HCT116 (cell line): ENCODE measurements at regions of chr10 and their contacts with region 1.

Region 1: GRCh38 chr10:26881600-26882331 is 21.0 kb upstream of the ABI1 start:
- DNase-seq: peak; percentile 69
- ATAC-seq: peak; percentile 95
- H3K4me3 ChIP-seq: peak overlapping the region; percentile 32 to 44
- H3K27ac ChIP-seq: no peak overlapping the region
- H3K4me1 ChIP-seq: peaks cover 0 to 6% of the 10 kb centered on the region in 2 experiments; a peak in 1 of 4 replicates
- H3K27me3 ChIP-seq: no peaks in the 10 kb centered on the region
- CTCF ChIP-seq: peak; percentile 69 to 87 (median 72)
- POLR2A ChIP-seq: no peak
- RAD21 ChIP-seq: peak; percentile 93

Region 2: DNA sequence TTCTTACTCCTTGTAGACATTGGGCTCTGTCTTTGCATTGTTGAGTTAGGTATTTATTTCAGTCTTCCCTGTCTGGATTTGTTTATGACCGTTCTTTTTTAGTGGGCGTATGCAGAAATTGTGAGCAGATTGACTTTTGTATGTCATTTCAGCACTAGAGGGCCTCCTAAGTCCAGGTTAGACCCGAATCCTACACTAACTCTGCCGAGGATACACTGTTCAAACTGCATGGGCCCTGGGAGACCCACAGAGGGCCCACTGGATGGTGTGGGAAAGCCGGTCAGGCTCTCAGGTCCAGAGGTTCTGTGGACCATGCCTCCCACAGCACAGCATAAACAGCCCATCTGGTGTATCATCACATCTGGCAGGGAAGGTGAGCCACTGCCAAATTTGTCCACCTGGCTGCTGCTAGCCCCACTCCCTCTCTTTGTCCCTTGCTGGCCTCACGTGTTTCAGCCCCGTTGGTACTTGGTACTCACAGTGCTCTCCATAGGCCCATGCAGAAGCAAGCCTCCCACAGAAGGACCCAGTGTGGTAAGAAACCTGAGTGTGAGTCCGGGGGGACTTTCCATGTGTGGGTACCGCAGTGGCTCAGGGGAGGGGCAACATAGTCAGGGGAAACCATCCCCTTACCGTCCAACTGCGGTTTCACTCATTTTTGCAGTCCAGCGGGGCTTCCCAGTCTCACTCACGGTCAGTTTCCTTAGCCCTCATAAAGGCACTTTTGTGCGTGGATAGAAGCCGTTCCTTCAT is 330.8 kb before region 1 on chr10:
- CTCF ChIA-PET with region 1: interaction called, 4 read pairs
- POLR2A ChIA-PET with region 1: interaction called, 3 read pairs
- RAD21 ChIA-PET with region 1: no interaction called
- intact Hi-C with region 1: loop called (anchors 2 kb)
- DNase-seq: peak; percentile 51
- ATAC-seq: peak; percentile 99
- H3K4me3 ChIP-seq: no peak overlapping the region
- H3K27ac ChIP-seq: no peak overlapping the region
- H3K4me1 ChIP-seq: no peaks in the 10 kb centered on the region
- H3K27me3 ChIP-seq: peaks cover 12% of the 10 kb centered on the region; the same call in 1 of the 2 replicates
- CTCF ChIP-seq: peak; percentile 51 to 64 (median 57); a peak in 5 of 6 replicates
- POLR2A ChIP-seq: no peak
- RAD21 ChIP-seq: peak; percentile 73

Region 3: GRCh38 chr10:26612151-26612915 is 269.4 kb before region 1 on chr10:
- CTCF ChIA-PET with region 1: no interaction called
- POLR2A ChIA-PET with region 1: no interaction called
- RAD21 ChIA-PET with region 1: no interaction called
- intact Hi-C with region 1: loop called (anchors 5 kb)
- DNase-seq: no peak
- ATAC-seq: no peak
- H3K4me3 ChIP-seq: no peak overlapping the region
- H3K27ac ChIP-seq: no peak overlapping the region
- H3K4me1 ChIP-seq: no peaks in the 10 kb centered on the region
- H3K27me3 ChIP-seq: no peaks in the 10 kb centered on the region
- CTCF ChIP-seq: no peak
- POLR2A ChIP-seq: no peak
- RAD21 ChIP-seq: no peak

Region 4: GRCh38 chr10:26725837-26726727 is 155.7 kb before region 1 on chr10:
- CTCF ChIA-PET with region 1: interaction called, 98 read pairs
- POLR2A ChIA-PET with region 1: interaction called, 4 read pairs
- RAD21 ChIA-PET with region 1: interaction called, 16 read pairs
- intact Hi-C with region 1: loop called (anchors 1 kb)
- DNase-seq: peak; percentile 13
- ATAC-seq: peak; percentile 69
- H3K4me3 ChIP-seq: no peak overlapping the region
- H3K27ac ChIP-seq: no peak overlapping the region
- H3K4me1 ChIP-seq: peaks cover 0 to 3% of the 10 kb centered on the region in 2 experiments; a peak in 1 of 4 replicates
- H3K27me3 ChIP-seq: no peaks in the 10 kb centered on the region
- CTCF ChIP-seq: peak; percentile 70 to 91 (median 72)
- POLR2A ChIP-seq: no peak
- RAD21 ChIP-seq: peak; percentile 88

Region 5: DNA sequence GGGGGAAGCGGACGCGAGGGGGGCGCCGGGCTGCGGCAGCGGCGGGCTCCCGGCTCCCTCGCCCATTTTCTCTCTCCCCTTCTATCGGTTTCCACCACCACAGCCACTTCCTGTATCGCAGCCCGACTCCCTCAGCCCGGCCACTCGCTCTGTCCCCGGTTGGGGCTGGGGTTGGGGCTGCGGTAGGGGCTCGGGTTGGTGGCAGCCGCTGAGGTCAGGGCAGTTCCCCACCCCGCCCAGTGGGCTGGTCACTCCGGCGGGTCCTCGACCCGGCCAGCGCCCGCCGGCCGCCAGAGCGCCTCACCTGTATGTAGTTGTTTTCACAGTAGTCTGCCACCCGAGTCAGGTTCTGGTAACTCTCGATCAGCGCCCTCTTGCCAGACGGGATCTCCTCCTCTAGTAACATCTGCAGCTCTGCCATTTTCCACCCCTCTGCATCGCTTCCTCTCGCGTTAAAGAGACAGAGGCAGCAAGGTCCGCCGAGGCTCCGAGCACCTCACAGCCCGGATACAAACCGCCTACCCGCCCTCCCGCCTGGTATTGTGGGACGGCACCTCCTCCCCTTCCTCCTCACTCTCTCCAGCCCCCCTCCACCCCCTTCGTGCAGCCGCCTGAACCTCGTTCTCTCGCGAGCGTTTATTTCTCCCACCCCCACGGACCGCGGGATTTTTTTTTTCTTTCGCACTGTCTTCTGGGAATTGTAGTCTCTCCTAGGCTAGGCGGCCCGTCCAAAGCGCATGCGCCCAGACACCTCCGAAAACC is 21.1 kb before region 1 on chr10 and contains the start of gene ABI1:
- CTCF ChIA-PET with region 1: interaction called, 18 read pairs
- POLR2A ChIA-PET with region 1: no interaction called
- RAD21 ChIA-PET with region 1: interaction called, 4 read pairs
- intact Hi-C with region 1: no loop called
- DNase-seq: peak; percentile 97
- ATAC-seq: peak; percentile 93
- H3K4me3 ChIP-seq: peak within 1 kb of the TSS; percentile 83 to 95
- H3K27ac ChIP-seq: peak within 1 kb of the TSS; percentile 82
- H3K4me1 ChIP-seq: peaks cover 0 to 25% of the 10 kb centered on the region in 2 experiments; a peak in 2 of 4 replicates
- H3K27me3 ChIP-seq: no peaks in the 10 kb centered on the region
- CTCF ChIP-seq: no peak
- POLR2A ChIP-seq: peak; percentile 93
- RAD21 ChIP-seq: no peak
- total RNA-seq, gene ABI1: 34.8 TPM

Region 6: DNA sequence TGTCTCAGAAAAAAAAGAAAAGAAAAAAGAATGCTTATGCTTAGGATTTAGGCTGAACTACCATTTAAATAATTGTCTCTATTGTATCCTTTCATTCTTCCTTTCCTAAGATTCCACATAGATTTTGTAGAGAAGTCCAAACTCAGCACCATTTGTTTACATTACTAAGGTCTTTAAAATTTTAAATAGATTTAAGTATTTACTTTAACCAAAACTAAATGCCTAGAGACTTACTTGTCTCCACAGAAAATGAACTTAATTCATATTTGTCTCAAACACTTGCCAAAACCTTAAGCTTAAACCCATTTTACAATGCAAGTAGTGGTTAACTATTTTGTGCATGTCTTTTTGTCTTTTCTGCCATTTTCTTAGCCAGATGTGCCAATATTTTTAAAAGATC is 33.1 kb after region 1 on chr10:
- CTCF ChIA-PET with region 1: no interaction called
- POLR2A ChIA-PET with region 1: no interaction called
- RAD21 ChIA-PET with region 1: no interaction called
- intact Hi-C with region 1: no loop called
- DNase-seq: no peak
- ATAC-seq: no peak
- H3K4me3 ChIP-seq: no peak overlapping the region
- H3K27ac ChIP-seq: no peak overlapping the region
- H3K4me1 ChIP-seq: no peaks in the 10 kb centered on the region
- H3K27me3 ChIP-seq: no peaks in the 10 kb centered on the region
- CTCF ChIP-seq: no peak
- POLR2A ChIP-seq: no peak
- RAD21 ChIP-seq: no peak

Region 7: DNA sequence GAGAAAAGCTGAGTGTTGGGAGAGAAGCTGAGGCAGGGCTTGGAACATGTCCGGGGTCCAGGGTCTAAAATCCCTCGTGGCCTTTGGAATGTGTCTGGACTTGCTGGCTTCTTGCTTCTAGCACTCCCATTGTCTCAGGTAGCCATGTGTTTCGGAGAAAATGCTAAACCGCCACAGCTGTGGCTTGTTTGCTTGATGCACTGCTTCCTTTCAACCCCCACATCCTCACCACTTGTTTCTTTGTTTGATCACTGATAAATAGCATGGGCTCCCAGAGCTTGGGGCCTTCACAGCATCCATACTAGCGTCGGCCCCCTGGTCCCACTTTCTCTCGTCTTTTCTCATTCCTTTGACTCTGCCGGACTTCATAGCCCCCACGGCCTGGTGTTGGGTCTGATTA is 115.8 kb after region 1 on chr10:
- CTCF ChIA-PET with region 1: no interaction called
- POLR2A ChIA-PET with region 1: no interaction called
- RAD21 ChIA-PET with region 1: no interaction called
- intact Hi-C with region 1: no loop called
- DNase-seq: no peak
- ATAC-seq: no peak
- H3K4me3 ChIP-seq: no peak overlapping the region
- H3K27ac ChIP-seq: no peak overlapping the region
- H3K4me1 ChIP-seq: no peaks in the 10 kb centered on the region
- H3K27me3 ChIP-seq: no peaks in the 10 kb centered on the region
- CTCF ChIP-seq: no peak
- POLR2A ChIP-seq: no peak
- RAD21 ChIP-seq: no peak

Region 8: GRCh38 chr10:27360581-27361172 is 478.9 kb after region 1 on chr10:
- CTCF ChIA-PET with region 1: no interaction called
- POLR2A ChIA-PET with region 1: no interaction called
- RAD21 ChIA-PET with region 1: no interaction called
- intact Hi-C with region 1: loop called (anchors 1 kb)
- DNase-seq: peak; percentile 68
- ATAC-seq: peak; percentile 98
- H3K4me3 ChIP-seq: no peak overlapping the region
- H3K27ac ChIP-seq: no peak overlapping the region
- H3K4me1 ChIP-seq: no peaks in the 10 kb centered on the region
- H3K27me3 ChIP-seq: no peaks in the 10 kb centered on the region
- CTCF ChIP-seq: peak; percentile 85 to 89 (median 87)
- POLR2A ChIP-seq: no peak
- RAD21 ChIP-seq: peak; percentile 94

Region 9: GRCh38 chr10:28326516-28327490 is 1445.0 kb after region 1 on chr10:
- CTCF ChIA-PET with region 1: no interaction called
- POLR2A ChIA-PET with region 1: no interaction called
- RAD21 ChIA-PET with region 1: no interaction called
- intact Hi-C with region 1: no loop called
- DNase-seq: no peak
- ATAC-seq: peak; percentile 53
- H3K4me3 ChIP-seq: no peak overlapping the region
- H3K27ac ChIP-seq: peak overlapping the region; percentile 49; the same call in 1 of the 2 replicates
- H3K4me1 ChIP-seq: peaks cover 41 to 44% of the 10 kb centered on the region in 2 experiments
- H3K27me3 ChIP-seq: no peaks in the 10 kb centered on the region
- CTCF ChIP-seq: no peak
- POLR2A ChIP-seq: no peak
- RAD21 ChIP-seq: no peak